ENCODE measurements at regions of chr1 and their contacts with region 1.

Region 1: DNA sequence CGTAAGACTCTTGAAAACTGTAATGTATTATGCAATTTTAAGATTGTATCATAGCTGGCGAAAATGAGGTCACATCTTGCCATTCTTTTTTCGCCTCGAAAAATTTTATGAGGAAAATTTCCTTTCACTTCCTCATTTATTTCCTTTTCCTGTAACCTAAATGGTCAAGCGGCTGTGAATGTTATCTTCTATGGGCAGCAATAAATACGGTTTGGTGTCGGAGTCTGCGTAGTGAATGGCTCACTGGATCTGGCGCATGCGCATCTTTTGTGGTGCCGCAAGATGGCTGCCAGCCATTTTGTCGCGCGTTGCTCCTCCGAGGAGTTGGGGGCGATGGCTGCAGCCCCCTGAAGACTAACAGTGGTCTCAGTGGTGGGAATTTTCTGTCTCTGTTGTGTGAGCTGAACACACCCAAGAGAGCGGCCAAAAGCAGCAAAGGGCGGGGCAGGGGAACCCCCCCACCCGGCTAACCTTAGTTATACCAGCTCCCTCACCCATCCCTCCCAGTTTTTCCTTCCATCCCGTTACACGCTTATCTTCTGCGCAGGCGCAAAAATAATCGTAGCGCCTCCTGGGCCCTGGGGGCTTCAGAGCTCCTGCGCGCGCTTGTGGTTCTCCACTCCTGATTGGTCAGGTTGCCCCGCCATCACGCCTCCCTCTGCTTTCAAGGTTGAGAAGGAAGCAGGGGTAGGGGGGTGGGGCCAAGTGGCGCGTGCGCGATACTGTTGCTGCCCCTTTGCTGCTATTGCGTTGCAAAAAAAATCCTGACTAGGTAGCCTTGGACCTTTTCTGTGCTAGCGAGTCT is at the start of gene RPRD2:
- DNase-seq: peak; percentile 100
- H3K4me3 Mint-ChIP-seq: peak within 1 kb of the TSS; percentile 89
- H3K27ac Mint-ChIP-seq: peak within 1 kb of the TSS; percentile 98
- H3K4me1 Mint-ChIP-seq: peaks cover 17% of the 10 kb centered on the region
- H3K27me3 Mint-ChIP-seq: no peaks in the 10 kb centered on the region
- total RNA-seq, gene RPRD2: 20.9 to 22.9 TPM

Region 2: DNA sequence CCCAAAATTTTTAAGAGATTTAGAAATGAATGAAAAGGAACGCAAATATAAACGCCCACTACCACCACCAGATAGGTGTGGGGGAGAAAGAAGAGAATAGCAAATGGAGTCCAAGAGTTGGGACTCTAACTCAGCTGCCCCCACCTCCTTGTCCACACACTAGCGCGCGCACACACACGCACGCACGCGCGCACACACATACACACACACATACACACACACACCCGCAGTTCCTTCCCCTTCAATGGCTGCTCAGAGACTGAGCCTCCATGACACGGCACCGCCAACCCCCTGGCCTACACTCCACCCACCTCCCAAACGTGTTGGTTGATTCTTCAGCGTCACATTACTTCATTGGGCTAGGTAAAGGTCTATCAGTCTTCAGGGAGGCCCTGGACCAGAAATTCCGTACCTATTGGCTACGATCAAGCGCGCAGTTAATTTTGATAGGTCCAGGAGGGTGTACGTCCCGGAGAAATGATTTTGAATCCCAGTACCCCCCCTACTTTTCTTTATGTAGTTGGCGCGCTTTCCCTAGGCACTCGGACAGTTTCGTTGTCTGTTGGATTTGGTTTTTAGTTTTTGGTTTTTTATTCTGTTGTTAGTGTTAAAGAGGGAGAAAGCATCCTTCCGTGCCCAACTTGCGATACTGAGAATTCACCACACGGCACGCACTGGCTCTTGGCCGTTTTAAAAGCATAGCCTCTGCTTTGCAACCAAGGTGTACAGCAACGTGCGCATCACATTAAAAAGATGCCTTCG is 127.6 kb before region 1 on chr1 and contains the start of gene ANP32E:
- CTCF ChIA-PET with region 1: no interaction called
- intact Hi-C with region 1: loop called (anchors 1 kb)
- DNase-seq: peak; percentile 97
- H3K4me3 Mint-ChIP-seq: no peak within 1 kb of the TSS
- H3K27ac Mint-ChIP-seq: no peak within 1 kb of the TSS
- H3K4me1 Mint-ChIP-seq: peaks cover 21% of the 10 kb centered on the region
- H3K27me3 Mint-ChIP-seq: no peaks in the 10 kb centered on the region
- total RNA-seq, gene ANP32E: 201 to 202 TPM

Region 3: DNA sequence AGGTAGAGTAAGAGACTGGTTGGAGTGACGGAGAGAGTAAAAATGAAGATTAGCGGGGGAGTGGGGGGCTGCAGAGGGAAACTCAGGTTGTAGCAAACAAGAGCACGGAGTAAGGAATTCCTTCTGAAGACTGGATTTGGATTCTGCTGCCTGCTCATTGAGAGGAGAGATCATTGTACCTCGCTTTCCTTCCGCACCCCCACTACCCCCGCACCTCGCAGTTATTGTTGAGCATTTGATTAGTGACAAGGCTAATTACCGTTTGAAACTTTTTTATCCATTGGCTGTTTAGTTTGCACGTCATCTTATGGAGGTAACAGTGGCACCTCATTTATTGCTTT is 41.8 kb before region 1 on chr1:
- CTCF ChIA-PET with region 1: interaction called, 3 read pairs
- intact Hi-C with region 1: loop called (anchors 1 kb)
- DNase-seq: no peak
- H3K4me3 Mint-ChIP-seq: peak overlapping the region; percentile 99
- H3K27ac Mint-ChIP-seq: peak overlapping the region; percentile 99
- H3K4me1 Mint-ChIP-seq: peaks cover 36% of the 10 kb centered on the region
- H3K27me3 Mint-ChIP-seq: no peaks in the 10 kb centered on the region

Region 4: DNA sequence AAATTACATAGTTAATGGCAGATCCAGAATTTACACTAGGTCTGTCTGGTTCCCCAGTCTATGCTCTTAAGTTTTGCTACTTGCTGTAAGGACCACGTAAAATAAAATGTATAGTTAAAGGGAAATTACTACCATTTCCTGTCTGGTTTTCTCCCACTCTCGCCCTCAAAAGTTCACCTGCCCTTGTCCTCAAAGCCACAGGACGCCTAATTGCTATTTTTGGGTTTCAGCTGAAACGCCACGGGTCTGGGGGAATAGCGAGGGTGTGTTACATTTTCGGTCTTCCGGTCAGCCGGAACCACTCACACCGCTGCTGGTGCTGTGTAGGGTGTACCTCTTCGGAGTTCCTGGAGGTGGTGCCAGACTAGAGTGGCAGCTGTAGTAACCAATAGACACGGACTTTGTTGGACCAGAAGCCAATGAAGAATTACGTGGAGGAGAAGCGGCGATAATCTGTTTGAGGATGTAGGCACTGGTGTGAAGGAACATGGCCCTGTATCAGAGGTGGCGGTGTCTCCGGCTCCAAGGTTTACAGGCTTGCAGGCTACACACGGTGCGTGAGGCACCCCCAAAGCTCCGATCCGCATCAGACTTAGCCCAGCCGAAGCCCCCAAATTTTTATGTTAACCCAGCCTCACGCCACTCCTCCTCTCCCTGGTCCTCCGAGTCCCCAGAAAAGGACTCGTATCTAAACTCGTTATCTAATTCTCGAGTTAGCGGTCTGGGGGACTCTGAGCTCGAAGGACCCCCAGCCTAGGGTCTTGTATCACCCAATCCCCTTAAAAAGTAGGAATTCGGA is 123.5 kb after region 1 on chr1 and contains the start of gene TARS2:
- CTCF ChIA-PET with region 1: no interaction called
- intact Hi-C with region 1: loop called (anchors 1 kb)
- DNase-seq: peak; percentile 99
- H3K4me3 Mint-ChIP-seq: peak within 1 kb of the TSS; percentile 98
- H3K27ac Mint-ChIP-seq: peak within 1 kb of the TSS; percentile 96
- H3K4me1 Mint-ChIP-seq: peaks cover 10% of the 10 kb centered on the region
- H3K27me3 Mint-ChIP-seq: no peaks in the 10 kb centered on the region
- total RNA-seq, gene TARS2: 43.7 to 46.0 TPM

Region 5: GRCh38 chr1:150876119-150876454 is 512.5 kb after region 1 on chr1:
- CTCF ChIA-PET with region 1: no interaction called
- intact Hi-C with region 1: loop called (anchors 5 kb)
- DNase-seq: peak; percentile 58
- H3K4me3 Mint-ChIP-seq: peak overlapping the region; percentile 83
- H3K27ac Mint-ChIP-seq: peak overlapping the region; percentile 83
- H3K4me1 Mint-ChIP-seq: peaks cover 18% of the 10 kb centered on the region
- H3K27me3 Mint-ChIP-seq: no peaks in the 10 kb centered on the region

Region 6: GRCh38 chr1:151059078-151059907 is 695.7 kb after region 1 on chr1 and contains the start of gene CDC42SE1:
- CTCF ChIA-PET with region 1: no interaction called
- intact Hi-C with region 1: loop called (anchors 5 kb)
- DNase-seq: peak; percentile 86
- H3K4me3 Mint-ChIP-seq: peak within 1 kb of the TSS; percentile 86
- H3K27ac Mint-ChIP-seq: peak within 1 kb of the TSS; percentile 98
- H3K4me1 Mint-ChIP-seq: peaks cover 53% of the 10 kb centered on the region
- H3K27me3 Mint-ChIP-seq: no peaks in the 10 kb centered on the region
- total RNA-seq, gene CDC42SE1: 98.1 to 99.0 TPM